ENCODE measurements at regions of chr3 and their contacts with region 1.

Region 1: GRCh38 chr3:168213920-168214319 is 118.2 kb upstream of the GOLIM4 start:
- DNase-seq: no peak
- ATAC-seq: no peak
- H3K4me3 ChIP-seq: no peak overlapping the region
- H3K27ac ChIP-seq: no peak overlapping the region
- H3K4me1 ChIP-seq: no peaks in the 10 kb centered on the region
- H3K27me3 ChIP-seq: no peaks in the 10 kb centered on the region
- CTCF ChIP-seq: no peak

Region 2: GRCh38 chr3:168285506-168285905 is 71.6 kb after region 1 on chr3:
- intact Hi-C with region 1: no loop called
- DNase-seq: no peak
- ATAC-seq: no peak
- H3K4me3 ChIP-seq: no peak overlapping the region
- H3K27ac ChIP-seq: no peak overlapping the region
- H3K4me1 ChIP-seq: no peaks in the 10 kb centered on the region
- H3K27me3 ChIP-seq: no peaks in the 10 kb centered on the region
- CTCF ChIP-seq: no peak

Region 3: GRCh38 chr3:168847291-168847883 is 633.5 kb after region 1 on chr3:
- intact Hi-C with region 1: loop called (anchors 5 kb)
- DNase-seq: no peak
- ATAC-seq: peak in 1 of 2 donors; percentile 54
- H3K4me3 ChIP-seq: no peak overlapping the region
- H3K27ac ChIP-seq: no peak overlapping the region
- H3K4me1 ChIP-seq: no peaks in the 10 kb centered on the region
- H3K27me3 ChIP-seq: no peaks in the 10 kb centered on the region
- CTCF ChIP-seq: peak; percentile 50

Measured in lower lobe of right lung (tissue), 2 donors.